Activated CD8-positive, alpha-beta T cell treated with anti-CD3 and anti-CD28 coated beads for 36 hours (primary cell): ENCODE measurements at regions of chr17 and their contacts with region 1.

Region 1: DNA sequence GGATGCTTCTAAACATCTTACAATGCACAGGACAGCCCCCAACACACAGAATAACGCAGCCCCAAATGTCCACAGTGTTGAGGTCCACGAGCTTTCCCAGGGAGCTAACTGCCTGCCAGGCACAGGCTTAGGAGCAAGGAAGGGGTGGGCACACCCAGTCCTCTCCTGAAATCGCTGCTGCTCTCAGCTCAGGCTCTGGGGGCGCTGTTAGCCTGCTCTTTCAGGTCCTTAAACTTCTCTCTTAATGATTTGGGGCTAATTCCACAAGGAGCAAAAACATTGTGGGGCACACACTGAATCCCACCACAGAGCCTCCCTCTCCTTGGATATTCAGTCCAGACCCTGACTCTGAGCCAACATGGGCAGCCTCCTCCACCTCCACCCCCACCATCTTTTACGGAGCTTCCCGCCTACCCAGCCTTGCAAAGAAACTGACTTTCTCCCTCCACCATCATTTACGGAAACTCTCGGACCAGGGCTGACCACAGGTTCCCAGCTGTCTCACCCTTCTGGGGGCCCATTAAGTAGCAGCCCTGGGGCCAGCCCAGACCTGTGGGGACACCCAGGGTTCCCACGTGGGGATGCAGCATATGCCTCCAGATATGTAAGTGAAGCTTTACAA is 1.1 kb downstream of the CD300H start:
- DNase-seq: peak; percentile 62
- ATAC-seq: no peak
- H3K4me3 Mint-ChIP-seq: no peak overlapping the region
- H3K27ac Mint-ChIP-seq: no peak overlapping the region
- H3K4me1 Mint-ChIP-seq: peaks cover 8% of the 10 kb centered on the region
- H3K27me3 Mint-ChIP-seq: peaks cover 24% of the 10 kb centered on the region
- CTCF ChIP-seq: peak; percentile 65

Region 2: GRCh38 chr17:74552037-74552436 is 14.2 kb before region 1 on chr17:
- CTCF ChIA-PET with region 1: interaction called, 11 read pairs
- POLR2A ChIA-PET with region 1: no interaction called
- intact Hi-C with region 1: no loop called
- DNase-seq: no peak
- ATAC-seq: no peak
- H3K4me3 Mint-ChIP-seq: no peak overlapping the region
- H3K27ac Mint-ChIP-seq: no peak overlapping the region
- H3K4me1 Mint-ChIP-seq: peaks cover 7% of the 10 kb centered on the region
- H3K27me3 Mint-ChIP-seq: peaks cover 4% of the 10 kb centered on the region
- CTCF ChIP-seq: no peak

Region 3: DNA sequence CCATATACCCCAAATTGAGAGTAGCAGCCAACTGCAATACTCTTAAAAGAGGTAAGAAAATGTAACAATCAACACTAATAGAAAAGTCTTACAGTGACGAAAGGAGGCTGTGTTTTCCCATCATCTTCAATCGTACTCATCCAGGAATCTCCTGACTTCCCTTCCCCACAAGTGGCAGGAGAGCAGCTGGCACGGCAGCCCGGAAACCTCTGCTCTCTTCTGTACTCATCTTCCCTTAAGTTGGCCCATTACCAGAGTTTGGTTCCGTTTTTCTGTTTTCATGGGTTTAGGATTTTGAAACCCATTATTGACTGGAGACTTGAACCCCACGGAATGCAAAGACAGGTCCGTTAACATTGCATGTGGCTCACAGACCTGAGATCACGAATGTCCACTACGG is 12.7 kb after region 1 on chr17:
- CTCF ChIA-PET with region 1: interaction called, 11 read pairs
- POLR2A ChIA-PET with region 1: no interaction called
- intact Hi-C with region 1: no loop called
- DNase-seq: no peak
- ATAC-seq: no peak
- H3K4me3 Mint-ChIP-seq: no peak overlapping the region
- H3K27ac Mint-ChIP-seq: no peak overlapping the region
- H3K4me1 Mint-ChIP-seq: peaks cover 6% of the 10 kb centered on the region
- H3K27me3 Mint-ChIP-seq: no peaks in the 10 kb centered on the region
- CTCF ChIP-seq: no peak

Region 4: GRCh38 chr17:74592087-74592990 is 26.1 kb after region 1 on chr17 and contains the start of gene CD300LD:
- CTCF ChIA-PET with region 1: interaction called, 14 read pairs
- POLR2A ChIA-PET with region 1: no interaction called
- intact Hi-C with region 1: no loop called
- DNase-seq: no peak
- ATAC-seq: peak; percentile 45
- H3K4me3 Mint-ChIP-seq: no peak within 1 kb of the TSS
- H3K27ac Mint-ChIP-seq: no peak within 1 kb of the TSS
- H3K4me1 Mint-ChIP-seq: peaks cover 9% of the 10 kb centered on the region
- H3K27me3 Mint-ChIP-seq: peaks cover 8% of the 10 kb centered on the region
- CTCF ChIP-seq: no peak
- total RNA-seq, gene CD300LD: not detected